Posterior vena cava (tissue), 2 donors: ENCODE measurements at regions of chr10 and their contacts with region 1.

Region 1: DNA sequence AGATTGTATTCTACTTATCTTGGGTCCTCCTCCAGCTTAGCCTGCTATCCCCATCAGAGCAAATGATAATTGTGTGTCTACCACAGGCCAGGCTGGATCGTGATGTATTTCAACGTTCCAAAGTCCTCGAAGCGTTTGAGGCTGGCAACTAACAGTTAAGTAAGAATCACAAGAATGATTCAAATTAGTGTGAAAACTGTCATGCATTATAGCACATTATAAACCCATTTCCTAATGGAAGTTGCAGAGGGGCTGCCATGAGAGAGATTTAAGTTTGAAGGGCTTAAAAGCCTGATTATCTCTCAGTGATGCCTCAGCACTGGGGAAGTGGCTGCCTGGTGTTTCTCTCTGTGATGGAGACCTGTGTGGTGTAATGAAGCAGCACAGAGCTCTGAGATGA is 119.1 kb downstream of the FRMD4A start:
- DNase-seq: no peak

Region 2: DNA sequence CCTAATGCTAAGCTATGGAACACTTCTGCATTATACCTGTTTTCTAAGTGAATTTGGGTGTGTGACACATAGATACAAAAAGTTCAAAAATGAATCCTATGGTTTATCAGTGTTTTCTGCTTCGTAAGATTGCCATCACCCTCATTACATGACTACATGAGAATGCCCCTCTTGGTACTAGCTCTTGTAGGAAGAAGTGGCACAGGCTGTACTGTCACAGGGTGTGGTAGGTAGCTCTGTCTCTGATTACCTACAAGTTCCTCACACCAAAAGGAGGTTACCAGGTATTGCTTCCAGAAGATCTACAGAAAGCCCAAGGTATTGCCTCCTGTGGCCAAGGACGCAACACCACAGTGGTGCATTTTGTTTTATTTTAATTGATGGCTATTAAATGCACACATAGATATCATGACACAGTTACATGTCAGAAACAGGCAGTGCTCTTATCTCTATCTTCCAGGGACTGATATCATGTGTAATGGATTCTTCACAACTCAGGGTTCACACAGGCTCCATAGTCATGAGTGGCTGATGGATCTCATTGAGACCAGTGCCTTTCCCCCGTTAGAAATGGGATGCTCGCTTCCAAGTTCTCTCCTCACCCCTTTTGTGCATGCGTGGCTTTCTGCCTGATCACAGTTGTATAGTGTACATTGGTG is 1105.1 kb before region 1 on chr10:
- intact Hi-C with region 1: no loop called
- DNase-seq: no peak

Region 3: DNA sequence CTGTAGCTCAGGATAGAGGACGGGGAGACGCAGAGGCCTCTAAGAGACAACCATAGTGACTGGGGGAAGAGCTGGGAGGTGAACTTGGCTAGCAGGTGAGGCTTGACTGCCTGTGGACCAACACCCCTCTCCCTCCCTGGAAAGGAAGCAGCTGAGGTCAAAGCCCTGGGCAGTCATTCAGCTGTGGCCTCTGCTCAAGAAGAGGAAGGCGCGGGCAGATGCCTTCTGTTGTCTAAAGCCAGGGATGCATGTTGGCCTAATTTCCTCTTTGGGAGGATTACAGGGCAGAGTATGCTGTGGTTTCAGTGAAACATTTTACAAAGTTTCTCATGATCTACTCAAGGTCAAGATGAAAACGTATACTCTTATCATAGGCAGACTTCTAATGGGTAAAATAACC is 297.7 kb before region 1 on chr10:
- intact Hi-C with region 1: no loop called
- DNase-seq: no peak

Region 4: DNA sequence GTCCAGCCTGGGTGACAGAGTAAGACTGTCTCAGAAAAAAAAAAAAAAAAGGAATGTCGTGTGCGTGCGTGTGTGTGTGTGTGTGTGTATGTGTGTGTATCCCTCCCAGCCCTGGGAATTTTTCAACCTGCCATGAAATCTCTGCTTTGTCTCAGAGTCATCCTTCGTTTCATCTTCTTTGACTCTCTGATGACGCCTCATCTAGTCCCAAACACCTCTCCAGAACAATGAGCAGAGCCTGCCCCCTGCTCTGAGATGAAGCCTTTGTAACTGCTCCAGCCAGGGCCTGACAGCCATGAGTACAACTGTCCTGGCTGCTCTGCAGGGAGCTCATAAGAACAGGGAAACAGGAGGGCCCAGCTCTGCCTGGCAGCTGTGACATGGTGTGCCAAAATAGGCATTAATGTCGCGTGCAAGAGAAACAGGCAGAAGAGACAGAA is 413.6 kb after region 1 on chr10:
- intact Hi-C with region 1: loop called in 1 of 2 experiments (anchors 5 kb)
- DNase-seq: no peak